Head of caudate nucleus (tissue), 42 donors: ENCODE measurements at regions of chr1 and their contacts with region 1.

Region 1: GRCh38 chr1:231757101-231757404 is 130.5 kb downstream of the DISC1 start:
- DNase-seq: no peak

Region 2: DNA sequence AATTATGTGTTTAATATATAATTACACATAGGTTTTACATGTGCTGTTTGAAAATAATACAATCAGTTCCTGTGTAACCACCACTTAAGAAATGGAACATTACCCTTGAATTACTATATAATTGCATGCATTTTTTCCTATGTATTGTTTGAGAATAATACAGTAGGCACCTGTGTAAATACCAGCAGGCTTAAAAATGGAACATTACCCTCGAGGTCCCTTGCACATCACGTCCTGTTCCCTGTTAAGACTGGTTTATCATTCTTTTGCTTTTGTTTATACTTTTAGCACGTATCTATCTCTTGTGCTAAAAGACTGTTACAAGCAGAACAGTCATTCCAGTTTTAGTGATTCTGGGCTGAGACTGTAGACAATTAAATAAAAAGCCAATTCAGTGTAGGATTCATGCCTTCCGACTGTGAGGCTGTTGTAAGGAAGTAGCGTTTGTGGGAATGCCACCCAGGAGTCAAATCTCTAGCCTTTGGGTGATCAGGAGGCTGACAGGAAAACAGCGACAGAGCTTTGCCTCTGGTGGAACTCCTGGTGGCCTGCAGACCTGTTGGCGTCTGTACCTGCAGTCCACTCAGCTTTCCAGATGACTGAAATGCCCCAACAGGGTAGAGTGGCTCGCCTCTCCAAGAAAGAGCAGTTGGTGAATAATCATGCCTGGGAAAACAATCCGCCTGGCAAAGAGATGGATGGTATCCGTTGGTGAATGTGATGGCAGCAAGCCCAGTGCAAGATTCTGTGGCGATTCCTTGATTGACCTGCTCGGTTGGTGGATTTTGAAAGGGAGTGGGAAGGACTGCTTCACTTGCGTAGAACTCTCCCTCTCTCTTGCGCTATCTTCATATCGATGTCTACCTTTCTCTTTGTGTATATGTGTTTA is 72.5 kb before region 1 on chr1:
- intact Hi-C with region 1: no loop called
- DNase-seq: peak in 1 of 42 donors; percentile 41

Region 3: GRCh38 chr1:231806623-231807495 is 49.8 kb after region 1 on chr1:
- intact Hi-C with region 1: loop called (anchors 1 kb)
- DNase-seq: peak in 41 of 42 donors; percentile 29 to 80 (median 60)

Region 4: DNA sequence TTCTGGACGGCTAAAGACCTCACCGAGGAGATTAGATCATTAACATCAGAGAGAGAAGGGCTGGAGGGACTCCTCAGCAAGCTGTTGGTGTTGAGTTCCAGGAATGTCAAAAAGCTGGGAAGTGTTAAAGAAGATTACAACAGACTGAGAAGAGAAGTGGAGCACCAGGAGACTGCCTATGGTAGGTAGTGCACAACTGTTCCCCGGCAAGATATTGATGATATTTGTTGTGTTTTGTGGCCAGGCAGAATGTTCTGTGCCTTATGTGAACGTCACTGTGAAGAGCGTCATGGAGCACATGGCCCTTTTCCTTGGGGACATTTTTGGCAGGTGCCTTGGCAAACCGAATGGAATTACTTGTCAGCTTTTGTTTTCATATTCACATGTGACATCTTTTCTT is 61.3 kb after region 1 on chr1:
- intact Hi-C with region 1: no loop called
- DNase-seq: no peak

Region 5: DNA sequence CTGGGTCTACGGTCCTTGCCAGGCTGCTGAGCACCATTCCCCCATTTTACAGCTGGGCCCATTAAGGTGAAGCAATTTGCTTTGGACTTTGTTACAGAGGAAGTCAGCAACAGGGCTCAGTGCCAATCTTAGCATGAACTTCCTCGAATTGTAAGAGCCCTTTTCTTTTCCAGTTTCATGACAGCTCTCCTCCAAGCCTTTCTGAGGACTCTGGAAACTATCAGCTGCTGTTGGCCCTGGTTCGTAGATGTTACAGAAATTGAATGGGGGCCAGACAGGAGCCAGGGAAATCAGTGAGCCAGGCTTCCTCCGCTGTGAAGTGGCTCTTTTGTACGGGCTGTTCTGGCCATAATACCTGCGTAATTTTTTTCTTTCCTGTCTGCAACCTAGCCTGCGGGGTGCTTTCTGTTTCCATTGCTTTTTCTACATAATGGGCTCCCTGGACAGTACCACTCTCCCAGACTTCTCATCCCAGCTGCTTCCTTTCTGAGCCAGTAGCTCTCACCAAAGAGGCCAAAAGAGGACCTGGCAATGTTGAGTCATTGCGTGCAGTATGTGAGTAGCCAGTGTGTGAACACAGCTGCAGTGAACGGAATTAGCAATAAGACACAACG is 255.8 kb after region 1 on chr1:
- intact Hi-C with region 1: no loop called
- DNase-seq: peak in 9 of 42 donors; percentile 3 to 43 (median 9)